ENCODE measurements at regions of chr13 and their contacts with region 1.

Region 1: DNA sequence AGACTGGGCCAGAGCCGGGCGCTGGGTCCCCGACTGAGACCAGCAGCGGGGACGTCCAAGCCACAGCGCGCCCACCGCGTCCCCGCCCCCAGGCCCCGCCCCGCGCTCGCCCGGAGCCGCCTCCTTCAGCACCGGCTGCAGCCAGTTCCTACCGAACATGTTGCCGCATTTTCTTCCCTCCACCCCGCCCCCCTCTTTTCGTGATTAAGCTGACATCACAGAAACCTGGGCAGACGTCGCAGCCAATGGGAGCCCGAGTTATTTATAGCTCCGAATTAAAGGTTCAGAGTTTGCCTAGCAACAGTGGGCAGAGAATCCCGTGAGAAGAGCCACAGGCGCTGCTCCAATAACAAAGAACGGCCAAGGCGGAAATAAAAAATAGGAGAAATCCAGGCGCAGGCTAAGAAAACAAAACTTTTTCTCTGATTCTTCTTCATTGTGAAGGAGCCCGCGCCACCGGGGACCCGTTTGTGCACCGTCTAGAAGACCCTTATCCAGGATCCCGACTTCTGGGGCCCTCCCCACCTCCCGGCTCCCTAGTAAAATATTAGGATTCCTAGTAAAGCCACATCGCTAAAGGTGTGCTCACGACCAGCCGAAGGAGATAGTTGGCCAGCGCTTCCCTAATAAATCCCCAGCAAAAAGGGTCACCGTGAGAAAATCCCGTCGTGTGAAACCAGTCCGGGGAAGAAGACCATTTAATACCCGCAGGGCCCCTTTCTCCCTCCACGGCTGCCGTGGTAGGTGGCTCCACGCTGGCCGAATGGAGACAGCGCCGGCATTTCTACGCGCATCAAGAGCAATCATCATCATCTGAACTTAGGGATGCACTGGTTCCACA is 61.7 kb downstream of the SERP2 start:
- DNase-seq: peak; percentile 96
- ATAC-seq: peak; percentile 76
- H3K4me3 ChIP-seq: peak overlapping the region; percentile 71 to 97 (median 79)
- H3K27ac ChIP-seq: peak overlapping the region; percentile 96
- H3K4me1 ChIP-seq: peaks cover 39% of the 10 kb centered on the region
- H3K27me3 ChIP-seq: no peaks in the 10 kb centered on the region; a peak in 1 of 5 replicates
- CTCF ChIP-seq: no peak
- EP300 ChIP-seq: peak in 1 of 2 experiments; percentile 87; a peak in 2 of 4 replicates
- POLR2A ChIP-seq: peak; percentile 15 to 55; a peak in 2 of 4 replicates
- RAD21 ChIP-seq: no peak

Region 2: DNA sequence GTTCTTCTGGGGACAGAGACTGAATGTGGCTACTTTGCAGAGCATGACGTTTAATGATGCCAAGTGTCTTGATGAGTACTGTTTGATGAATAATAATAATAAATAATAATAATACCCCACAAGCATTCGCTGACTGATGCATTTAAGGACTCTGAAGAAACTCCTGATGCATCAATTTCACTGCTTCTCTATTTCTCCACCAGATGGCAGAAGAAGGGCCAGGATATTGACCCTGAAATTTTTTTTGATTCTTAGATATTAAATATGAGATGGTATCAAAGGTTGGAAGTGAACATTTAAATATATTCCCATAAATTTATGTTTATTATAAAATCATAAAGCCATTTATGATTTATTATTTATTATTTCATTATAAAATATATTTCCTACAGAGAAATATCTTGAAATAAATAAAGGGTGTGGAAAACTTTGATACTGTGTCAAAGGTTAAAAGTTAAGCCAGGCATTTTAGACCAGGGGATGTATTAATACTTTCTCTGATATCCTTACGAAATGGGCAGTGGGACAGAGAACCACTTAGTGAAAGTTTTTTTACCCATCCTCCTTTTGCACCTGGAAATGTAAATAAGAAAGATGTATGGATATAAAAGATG is 384.8 kb before region 1 on chr13:
- CTCF ChIA-PET with region 1: interaction called, 38 read pairs
- POLR2A ChIA-PET with region 1: interaction called, 4 read pairs
- in situ Hi-C with region 1: loop called (anchors 5 kb)
- intact Hi-C with region 1: loop called (anchors 1 kb)
- DNase-seq: peak; percentile 7
- ATAC-seq: no peak
- H3K4me3 ChIP-seq: no peak overlapping the region
- H3K27ac ChIP-seq: no peak overlapping the region
- H3K4me1 ChIP-seq: no peaks in the 10 kb centered on the region
- H3K27me3 ChIP-seq: no peaks in the 10 kb centered on the region
- CTCF ChIP-seq: peak; percentile 41
- EP300 ChIP-seq: no peak
- POLR2A ChIP-seq: no peak
- RAD21 ChIP-seq: no peak

Region 3: DNA sequence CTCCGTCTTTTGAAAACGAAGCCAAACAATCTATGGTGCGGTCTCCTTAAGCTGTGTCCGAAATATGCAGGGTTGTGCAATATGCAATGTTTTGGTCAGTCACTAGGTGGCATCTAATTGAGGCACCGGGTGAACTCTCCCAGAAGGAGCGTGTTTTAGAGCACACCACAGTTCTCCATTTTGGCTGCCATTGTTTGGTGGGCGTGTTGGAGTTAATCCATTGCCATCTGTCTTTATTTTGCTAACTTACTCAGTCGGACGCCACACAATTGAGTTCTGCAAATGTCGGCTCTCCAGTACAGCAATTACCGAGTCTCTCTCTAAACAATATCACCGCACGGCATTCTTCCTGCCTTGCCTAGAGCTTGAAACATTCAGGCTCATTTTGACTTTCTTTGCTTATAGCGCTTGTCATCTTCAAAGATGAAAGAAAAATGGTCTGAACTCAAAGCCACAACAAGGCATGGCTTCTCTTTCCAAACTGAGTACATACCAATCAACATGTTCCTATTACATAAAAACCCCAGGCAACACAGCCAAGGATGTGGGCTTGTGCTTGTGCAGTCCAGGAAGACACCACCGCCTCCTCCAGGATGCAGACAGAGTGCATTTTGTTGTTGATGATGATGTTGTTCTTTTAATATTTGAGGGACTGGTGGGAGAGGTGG is 243.7 kb before region 1 on chr13:
- CTCF ChIA-PET with region 1: interaction called, 8 read pairs
- POLR2A ChIA-PET with region 1: interaction called, 5 read pairs
- in situ Hi-C with region 1: loop called (anchors 5 kb)
- intact Hi-C with region 1: loop called (anchors 1 kb)
- DNase-seq: peak; percentile 64
- ATAC-seq: peak; percentile 95
- H3K4me3 ChIP-seq: no peak overlapping the region
- H3K27ac ChIP-seq: no peak overlapping the region
- H3K4me1 ChIP-seq: peaks cover 29% of the 10 kb centered on the region
- H3K27me3 ChIP-seq: no peaks in the 10 kb centered on the region
- CTCF ChIP-seq: peak; percentile 76
- EP300 ChIP-seq: no peak
- POLR2A ChIP-seq: no peak
- RAD21 ChIP-seq: peak; percentile 61

Region 4: DNA sequence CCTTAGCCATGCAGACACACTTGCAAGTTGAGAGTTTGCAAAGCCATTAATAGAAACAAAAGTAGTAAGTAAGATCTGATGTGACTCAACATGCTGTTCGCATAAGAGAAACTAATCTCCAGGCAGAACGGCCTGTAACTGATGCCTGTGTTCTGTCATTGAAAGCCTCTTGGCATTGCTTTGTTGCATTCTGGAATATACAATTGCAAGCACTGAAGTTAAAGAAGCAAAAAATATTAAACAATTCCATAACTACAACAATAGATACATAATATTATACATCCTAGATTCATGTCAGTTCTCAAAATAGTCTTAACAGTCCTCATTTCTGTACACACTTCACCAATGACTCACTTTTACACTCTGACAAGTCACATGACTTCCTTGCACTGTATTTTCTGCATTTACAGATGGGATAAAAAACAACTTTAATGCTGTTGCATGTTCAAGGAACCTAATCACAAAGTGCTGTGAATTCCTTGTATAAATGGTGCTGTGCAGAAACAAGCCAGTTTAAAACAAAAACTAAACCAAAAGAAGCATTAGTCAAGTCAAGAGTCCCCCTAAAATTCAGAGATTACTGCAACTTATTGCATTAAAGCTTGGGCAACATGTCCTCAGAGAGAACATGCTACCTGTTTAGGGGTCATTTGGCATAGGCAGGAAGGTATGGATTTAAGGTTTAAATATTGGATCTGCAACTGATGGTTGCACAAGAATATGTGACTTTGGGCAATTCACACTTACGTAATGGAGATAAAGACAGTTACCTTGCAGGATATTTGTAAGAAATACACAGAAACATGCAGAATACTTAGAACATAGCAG is 141.2 kb before region 1 on chr13:
- CTCF ChIA-PET with region 1: no interaction called
- POLR2A ChIA-PET with region 1: no interaction called
- in situ Hi-C with region 1: no loop called
- intact Hi-C with region 1: no loop called
- DNase-seq: no peak
- ATAC-seq: no peak
- H3K4me3 ChIP-seq: no peak overlapping the region
- H3K27ac ChIP-seq: no peak overlapping the region
- H3K4me1 ChIP-seq: no peaks in the 10 kb centered on the region
- H3K27me3 ChIP-seq: peaks cover 0 to 1% of the 10 kb centered on the region in 2 experiments; a peak in 1 of 5 replicates
- CTCF ChIP-seq: no peak
- EP300 ChIP-seq: no peak
- POLR2A ChIP-seq: no peak
- RAD21 ChIP-seq: no peak

Region 5: DNA sequence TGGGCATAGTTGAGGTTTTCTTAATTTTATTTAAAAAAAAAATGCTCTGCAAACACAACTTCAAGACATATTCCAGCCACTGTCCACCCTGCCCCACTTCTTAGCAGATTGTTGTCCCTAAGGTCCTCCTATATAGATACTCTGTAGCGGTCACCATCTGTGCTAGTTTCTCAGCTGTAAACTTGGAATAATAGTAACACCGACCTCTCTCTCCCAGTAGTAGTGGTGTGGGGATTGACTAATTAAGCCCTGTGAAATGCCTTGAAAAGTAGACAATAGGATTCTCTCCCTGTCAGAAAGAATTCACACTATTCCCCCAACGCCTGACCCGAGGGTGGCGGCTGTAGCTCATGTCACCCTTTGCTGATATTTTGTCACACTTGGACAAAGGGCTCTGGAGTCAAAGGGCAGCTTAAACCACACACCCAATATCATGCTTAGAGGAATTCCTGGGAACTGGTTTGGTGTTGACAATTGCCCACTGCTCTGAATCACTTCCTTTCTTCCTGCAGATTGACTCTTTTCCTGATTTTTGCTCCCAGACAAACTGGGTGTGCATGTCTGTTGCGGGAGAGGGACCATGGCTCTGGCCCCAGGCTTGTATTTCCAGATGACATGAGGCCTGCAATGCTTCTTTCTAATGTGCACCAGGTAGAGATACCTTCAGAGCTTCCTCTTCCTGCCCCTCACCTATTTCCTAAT is 70.9 kb before region 1 on chr13:
- CTCF ChIA-PET with region 1: no interaction called
- POLR2A ChIA-PET with region 1: interaction called, 4 read pairs
- in situ Hi-C with region 1: no loop called
- intact Hi-C with region 1: loop called (anchors 5 kb)
- DNase-seq: peak; percentile 82
- ATAC-seq: peak; percentile 95
- H3K4me3 ChIP-seq: peak overlapping the region in 1 of 3 experiments; percentile 19; a peak in 1 of 6 replicates
- H3K27ac ChIP-seq: peak overlapping the region; percentile 1
- H3K4me1 ChIP-seq: peaks cover 59% of the 10 kb centered on the region
- H3K27me3 ChIP-seq: no peaks in the 10 kb centered on the region
- CTCF ChIP-seq: no peak
- EP300 ChIP-seq: peak in 1 of 2 experiments; percentile 65; a peak in 2 of 4 replicates
- POLR2A ChIP-seq: no peak
- RAD21 ChIP-seq: no peak

Region 6: GRCh38 chr13:44417446-44418270 is 17.7 kb before region 1 on chr13:
- CTCF ChIA-PET with region 1: no interaction called
- POLR2A ChIA-PET with region 1: interaction called, 11 read pairs
- in situ Hi-C with region 1: no loop called
- intact Hi-C with region 1: no loop called
- DNase-seq: peak; percentile 25
- ATAC-seq: peak; percentile 71
- H3K4me3 ChIP-seq: no peak overlapping the region; a peak in 2 of 6 replicates
- H3K27ac ChIP-seq: no peak overlapping the region
- H3K4me1 ChIP-seq: peaks cover 25% of the 10 kb centered on the region
- H3K27me3 ChIP-seq: peaks cover 1 to 6% of the 10 kb centered on the region in 2 experiments; a peak in 3 of 5 replicates
- CTCF ChIP-seq: no peak
- EP300 ChIP-seq: no peak
- POLR2A ChIP-seq: no peak
- RAD21 ChIP-seq: no peak

Region 7: DNA sequence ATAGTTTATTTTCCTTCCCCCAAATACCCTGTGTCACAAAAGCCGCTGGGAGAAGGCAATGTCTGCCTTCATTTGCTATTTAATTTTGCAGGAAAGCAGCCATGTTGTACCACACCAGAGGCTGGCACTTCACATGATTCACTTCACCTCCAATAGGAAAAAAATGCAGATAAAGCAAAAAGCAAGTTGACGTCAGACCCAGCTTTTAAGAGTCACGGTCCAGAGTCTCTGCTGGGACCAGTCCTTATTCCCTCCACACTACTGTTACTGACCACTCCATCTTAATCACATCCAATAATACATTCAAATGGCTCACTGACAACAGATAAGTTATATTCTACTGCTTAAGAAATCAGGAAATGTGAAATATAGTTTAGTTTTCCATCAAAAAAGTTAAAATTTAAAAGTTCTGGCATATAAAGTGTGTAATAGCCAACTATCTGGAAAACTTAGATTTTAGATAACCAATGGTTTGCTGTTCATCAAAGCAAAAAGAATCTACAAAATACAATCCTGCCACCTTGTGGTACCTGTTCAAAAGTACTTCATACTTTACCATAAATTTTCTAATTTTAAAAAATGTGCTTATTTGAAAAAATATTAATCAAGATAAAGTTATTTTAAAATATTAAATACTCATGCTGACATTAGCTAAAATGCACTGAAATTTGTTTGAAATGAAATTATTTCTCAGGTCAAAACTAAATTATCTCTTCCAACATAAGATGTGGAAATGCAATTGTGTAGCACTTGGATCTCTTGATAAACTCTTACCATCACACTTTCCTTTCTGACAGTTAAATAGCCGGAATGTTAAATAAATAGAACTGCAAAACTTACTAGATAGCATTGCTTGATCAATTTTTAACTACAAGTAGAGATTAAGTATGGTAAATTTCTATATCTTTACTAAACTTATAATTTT is 35.5 kb after region 1 on chr13:
- CTCF ChIA-PET with region 1: interaction called, 4 read pairs
- POLR2A ChIA-PET with region 1: no interaction called
- in situ Hi-C with region 1: no loop called
- intact Hi-C with region 1: loop called (anchors 1 kb)
- DNase-seq: peak; percentile 29
- ATAC-seq: no peak
- H3K4me3 ChIP-seq: no peak overlapping the region
- H3K27ac ChIP-seq: no peak overlapping the region
- H3K4me1 ChIP-seq: no peaks in the 10 kb centered on the region
- H3K27me3 ChIP-seq: no peaks in the 10 kb centered on the region
- CTCF ChIP-seq: peak; percentile 47
- EP300 ChIP-seq: no peak
- POLR2A ChIP-seq: no peak
- RAD21 ChIP-seq: 0 out of 2 replicates have a peak, but pooled peaks have one; percentile 26

Region 8: GRCh38 chr13:44487989-44488388 is 52.6 kb after region 1 on chr13:
- CTCF ChIA-PET with region 1: no interaction called
- POLR2A ChIA-PET with region 1: no interaction called
- in situ Hi-C with region 1: no loop called
- intact Hi-C with region 1: no loop called
- DNase-seq: no peak
- ATAC-seq: no peak
- H3K4me3 ChIP-seq: no peak overlapping the region
- H3K27ac ChIP-seq: no peak overlapping the region
- H3K4me1 ChIP-seq: no peaks in the 10 kb centered on the region
- H3K27me3 ChIP-seq: no peaks in the 10 kb centered on the region
- CTCF ChIP-seq: no peak
- EP300 ChIP-seq: no peak
- POLR2A ChIP-seq: no peak
- RAD21 ChIP-seq: no peak

Region 9: DNA sequence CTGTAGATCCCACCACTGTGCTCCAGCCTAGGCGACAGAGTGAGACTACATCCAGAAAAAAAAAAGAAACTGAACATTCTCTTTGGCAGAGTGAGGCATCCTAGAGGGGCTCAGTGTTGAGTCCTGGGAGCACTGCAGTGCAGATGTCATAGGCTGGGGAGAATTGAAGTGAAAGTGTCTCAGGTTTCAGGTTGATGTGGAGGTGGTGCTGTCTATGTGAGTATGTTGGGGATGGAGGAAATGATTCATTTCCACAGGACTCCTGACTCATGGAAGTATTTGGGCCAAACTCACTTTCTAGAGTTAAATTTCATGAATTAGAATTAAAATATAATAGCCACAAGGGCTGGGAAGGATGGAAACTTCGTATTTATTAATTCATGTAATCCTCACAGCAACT is 275.2 kb after region 1 on chr13:
- CTCF ChIA-PET with region 1: no interaction called
- POLR2A ChIA-PET with region 1: no interaction called
- in situ Hi-C with region 1: no loop called
- intact Hi-C with region 1: no loop called
- DNase-seq: no peak
- ATAC-seq: no peak
- H3K4me3 ChIP-seq: no peak overlapping the region
- H3K27ac ChIP-seq: no peak overlapping the region
- H3K4me1 ChIP-seq: no peaks in the 10 kb centered on the region
- H3K27me3 ChIP-seq: no peaks in the 10 kb centered on the region
- CTCF ChIP-seq: no peak
- EP300 ChIP-seq: no peak
- POLR2A ChIP-seq: no peak
- RAD21 ChIP-seq: no peak